ENCODE measurements at regions of chr15 and their contacts with region 1.

Region 1: GRCh38 chr15:50496692-50497091 is 49.8 kb downstream of the USP50 start:
- DNase-seq: no peak
- ATAC-seq: no peak
- H3K4me3 ChIP-seq: no peak overlapping the region
- H3K27ac ChIP-seq: no peak overlapping the region
- H3K4me1 ChIP-seq: no peaks in the 10 kb centered on the region
- H3K27me3 ChIP-seq: no peaks in the 10 kb centered on the region

Region 2: GRCh38 chr15:50562735-50563640 is 66.3 kb after region 1 on chr15:
- intact Hi-C with region 1: loop called in 1 of 2 experiments (anchors 10 kb)
- DNase-seq: no peak
- ATAC-seq: no peak
- H3K4me3 ChIP-seq: no peak overlapping the region
- H3K27ac ChIP-seq: no peak overlapping the region
- H3K4me1 ChIP-seq: no peaks in the 10 kb centered on the region
- H3K27me3 ChIP-seq: no peaks in the 10 kb centered on the region

Region 3: DNA sequence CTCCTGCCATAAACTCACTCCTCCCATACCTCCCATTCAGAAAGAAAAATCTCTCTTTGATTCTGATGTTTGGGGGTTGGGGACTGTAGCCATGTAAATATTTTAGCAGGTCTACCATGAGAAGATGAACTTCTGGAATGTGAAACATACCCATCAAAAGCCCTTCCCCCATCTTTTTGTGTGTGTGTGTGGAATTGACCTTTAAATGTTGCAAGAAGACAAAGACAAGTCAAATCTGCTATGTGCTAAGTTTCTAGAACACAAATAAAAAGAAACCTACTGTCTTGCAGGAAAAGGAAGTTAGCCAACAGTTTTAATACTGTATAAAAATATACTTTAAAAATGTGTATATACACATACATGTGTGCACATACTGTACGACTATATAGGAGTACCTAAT is 79.5 kb after region 1 on chr15:
- intact Hi-C with region 1: loop called in 1 of 2 experiments (anchors 10 kb)
- DNase-seq: no peak
- ATAC-seq: no peak
- H3K4me3 ChIP-seq: no peak overlapping the region
- H3K27ac ChIP-seq: no peak overlapping the region
- H3K4me1 ChIP-seq: no peaks in the 10 kb centered on the region
- H3K27me3 ChIP-seq: no peaks in the 10 kb centered on the region